MCF 10A (cell line): ENCODE measurements at regions of chr10 and their contacts with region 1.

Region 1: GRCh38 chr10:67697724-67698131 is 1.7 kb upstream of the CTNNA3 start:
- DNase-seq: peak; percentile 64
- H3K4me3 Mint-ChIP-seq: no peak overlapping the region
- H3K27ac Mint-ChIP-seq: no peak overlapping the region
- H3K4me1 Mint-ChIP-seq: no peaks in the 10 kb centered on the region
- H3K27me3 Mint-ChIP-seq: peaks cover 26% of the 10 kb centered on the region
- CTCF ChIP-seq: peak; percentile 58

Region 2: GRCh38 chr10:67676203-67676825 is 21.4 kb before region 1 on chr10:
- CTCF ChIA-PET with region 1: interaction called, 11 read pairs
- POLR2A ChIA-PET with region 1: no interaction called
- intact Hi-C with region 1: no loop called
- DNase-seq: no peak
- H3K4me3 Mint-ChIP-seq: no peak overlapping the region
- H3K27ac Mint-ChIP-seq: no peak overlapping the region
- H3K4me1 Mint-ChIP-seq: no peaks in the 10 kb centered on the region
- H3K27me3 Mint-ChIP-seq: peaks cover 59% of the 10 kb centered on the region
- CTCF ChIP-seq: no peak

Region 3: DNA sequence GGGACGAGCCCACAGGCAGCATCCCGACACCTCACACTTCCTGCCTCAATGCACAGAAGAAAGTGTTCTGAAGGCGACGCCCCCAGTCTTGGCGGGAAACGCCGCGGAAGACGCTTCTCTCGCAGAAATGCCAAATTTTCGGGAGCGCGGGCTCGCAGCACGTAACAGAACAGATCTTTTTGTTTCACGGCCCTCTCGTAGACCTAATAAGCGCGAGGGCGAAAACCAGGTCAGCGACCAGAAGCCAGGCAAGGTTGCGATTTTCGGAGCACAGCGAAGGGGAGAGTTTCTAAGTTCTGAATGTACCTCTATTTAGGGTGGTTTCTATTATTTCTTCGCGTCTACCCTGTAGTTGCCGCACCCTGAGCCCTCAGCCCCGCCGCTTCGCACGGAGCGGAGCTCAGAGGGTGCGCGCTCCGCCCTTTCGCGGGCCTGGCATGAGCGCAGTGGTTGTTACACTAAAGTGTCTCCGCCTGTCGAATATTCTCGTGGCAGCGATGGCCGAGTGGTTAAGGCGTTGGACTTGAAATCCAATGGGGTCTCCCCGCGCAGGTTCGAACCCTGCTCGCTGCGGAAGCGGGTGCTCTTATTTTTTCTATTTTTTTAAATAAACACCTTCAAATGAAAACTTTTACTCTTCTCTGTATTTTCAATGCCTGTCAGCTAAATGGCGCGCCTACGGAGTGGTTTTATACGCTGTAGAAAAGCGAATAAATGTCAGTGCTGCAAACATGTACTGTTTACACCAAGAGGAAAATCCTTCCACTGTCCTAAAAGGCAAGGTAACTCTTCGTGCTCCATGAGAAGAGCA is 66.5 kb after region 1 on chr10:
- CTCF ChIA-PET with region 1: interaction called, 11 read pairs
- POLR2A ChIA-PET with region 1: interaction called, 3 read pairs
- intact Hi-C with region 1: no loop called
- DNase-seq: peak; percentile 93
- H3K4me3 Mint-ChIP-seq: peak overlapping the region; percentile 82
- H3K27ac Mint-ChIP-seq: peak overlapping the region; percentile 75
- H3K4me1 Mint-ChIP-seq: no peaks in the 10 kb centered on the region
- H3K27me3 Mint-ChIP-seq: no peaks in the 10 kb centered on the region
- CTCF ChIP-seq: no peak

Region 4: GRCh38 chr10:67772894-67773511 is 75.3 kb after region 1 on chr10:
- CTCF ChIA-PET with region 1: interaction called, 174 read pairs
- POLR2A ChIA-PET with region 1: no interaction called
- intact Hi-C with region 1: no loop called
- DNase-seq: no peak
- H3K4me3 Mint-ChIP-seq: no peak overlapping the region
- H3K27ac Mint-ChIP-seq: no peak overlapping the region
- H3K4me1 Mint-ChIP-seq: no peaks in the 10 kb centered on the region
- H3K27me3 Mint-ChIP-seq: no peaks in the 10 kb centered on the region
- CTCF ChIP-seq: no peak

Region 5: GRCh38 chr10:68594405-68594804 is 896.7 kb after region 1 on chr10:
- CTCF ChIA-PET with region 1: no interaction called
- POLR2A ChIA-PET with region 1: no interaction called
- intact Hi-C with region 1: no loop called
- DNase-seq: peak; percentile 78
- H3K4me3 Mint-ChIP-seq: no peak overlapping the region
- H3K27ac Mint-ChIP-seq: peak overlapping the region; percentile 86
- H3K4me1 Mint-ChIP-seq: peaks cover 10% of the 10 kb centered on the region
- H3K27me3 Mint-ChIP-seq: no peaks in the 10 kb centered on the region
- CTCF ChIP-seq: no peak